ENCODE measurements at regions of chr22 and their contacts with region 1.

Region 1: DNA sequence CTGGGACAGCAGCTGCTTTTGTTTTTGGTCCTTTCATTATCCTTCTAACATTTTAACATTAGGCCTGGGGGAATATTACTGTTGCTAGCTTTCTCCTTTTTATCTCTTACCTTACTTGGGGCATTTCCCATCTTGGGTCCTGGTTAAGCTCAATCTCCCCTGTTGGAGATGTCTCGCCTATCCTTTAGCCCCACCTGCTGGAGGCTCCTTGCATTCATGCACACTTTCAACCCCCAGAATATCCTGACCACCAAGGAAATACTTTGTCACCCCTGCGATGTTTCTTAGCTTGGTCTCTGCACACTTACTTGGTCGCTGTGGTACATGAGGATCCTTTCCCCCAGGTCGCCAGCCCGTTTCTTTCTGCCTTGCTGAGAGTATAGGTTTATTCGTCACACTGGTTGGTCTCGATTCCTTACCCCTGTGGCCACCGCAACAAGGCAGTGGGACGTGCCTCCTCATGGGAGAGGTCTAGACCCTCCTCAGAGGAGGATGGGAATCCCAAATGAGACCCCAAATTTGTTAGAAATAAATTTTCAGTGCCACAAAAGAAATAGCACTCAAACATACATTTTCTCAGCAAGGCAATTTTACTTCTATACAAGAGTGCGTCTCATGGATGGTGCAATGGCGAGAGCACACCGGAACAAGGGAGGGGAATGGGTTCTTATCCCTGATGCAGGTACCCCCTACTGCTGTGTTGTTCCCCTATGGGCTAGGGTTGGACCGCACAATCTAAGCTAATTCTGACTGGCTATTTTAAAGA is 5.4 kb upstream of the TXN2 start:
- DNase-seq: peak; percentile 43
- H3K4me3 ChIP-seq: no peak overlapping the region
- H3K27ac ChIP-seq: no peak overlapping the region
- H3K4me1 ChIP-seq: no peaks in the 10 kb centered on the region
- H3K27me3 ChIP-seq: no peaks in the 10 kb centered on the region
- CTCF ChIP-seq: peak; percentile 51 to 70
- POLR2A ChIP-seq: no peak

Region 2: DNA sequence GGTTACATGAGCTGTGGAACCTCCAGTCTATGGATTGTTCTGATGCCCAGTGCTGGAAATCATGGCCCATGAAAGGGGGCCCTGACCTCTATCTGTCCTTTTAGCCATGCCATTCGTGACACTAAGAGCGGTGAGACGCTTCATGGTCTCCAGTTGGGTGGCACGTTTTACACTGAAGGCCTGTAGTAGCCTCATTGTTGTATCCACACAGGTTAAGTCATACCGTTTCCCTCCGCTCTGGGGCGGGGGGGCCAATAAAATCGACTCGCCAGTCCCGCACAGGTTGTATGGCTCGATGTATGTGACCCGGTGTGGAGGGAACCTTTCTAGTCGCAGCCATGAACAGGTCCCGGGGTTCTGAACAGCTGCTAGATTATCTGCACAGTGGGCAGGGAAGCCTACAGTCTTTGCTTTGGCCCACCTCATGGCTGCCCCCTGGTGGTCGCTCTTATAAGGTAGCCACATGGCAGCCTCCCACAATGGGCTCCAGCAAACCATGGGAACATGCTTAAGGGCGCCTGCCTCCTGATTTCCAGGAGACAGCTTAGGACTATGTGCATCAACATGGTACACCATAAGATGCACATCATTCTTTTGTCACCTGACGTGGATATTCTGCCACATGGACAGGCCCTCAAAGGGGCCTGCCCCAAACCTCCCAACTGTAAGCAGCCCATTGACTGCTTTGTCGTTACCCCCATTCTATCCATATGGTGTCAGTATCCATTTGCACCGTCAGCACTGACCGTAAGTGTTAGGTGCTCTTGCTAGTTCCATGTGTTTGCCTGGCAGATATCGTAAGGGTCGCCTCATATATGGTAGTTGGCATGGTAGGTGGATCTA is 306.5 kb before region 1 on chr22:
- CTCF ChIA-PET with region 1: interaction called, 17 read pairs
- POLR2A ChIA-PET with region 1: no interaction called
- dilution Hi-C with region 1: no loop called
- intact Hi-C with region 1: loop called (anchors 1 kb)
- DNase-seq: peak; percentile 71
- H3K4me3 ChIP-seq: no peak overlapping the region
- H3K27ac ChIP-seq: no peak overlapping the region
- H3K4me1 ChIP-seq: no peaks in the 10 kb centered on the region
- H3K27me3 ChIP-seq: no peaks in the 10 kb centered on the region
- CTCF ChIP-seq: peak; percentile 84 to 92
- POLR2A ChIP-seq: no peak

Region 3: DNA sequence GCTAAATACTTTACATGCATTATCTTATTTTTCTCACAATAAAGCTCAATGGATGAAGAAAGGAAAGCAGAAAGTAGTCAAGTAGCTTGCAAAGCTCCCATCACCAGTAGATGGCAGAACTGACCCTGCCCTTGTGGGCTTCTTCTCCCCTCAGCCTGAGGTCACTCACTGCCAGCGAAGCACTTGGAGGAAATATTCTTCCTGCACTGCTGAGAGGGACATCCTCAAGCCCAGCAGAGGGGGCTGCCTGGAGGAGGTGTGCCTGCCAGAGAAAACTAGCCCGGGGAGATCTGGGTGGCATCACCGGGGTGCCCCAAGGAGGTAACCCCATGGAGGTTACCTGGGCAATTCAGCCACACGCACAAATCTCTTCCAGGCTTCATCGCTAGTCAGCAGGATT is 291.8 kb before region 1 on chr22:
- CTCF ChIA-PET with region 1: interaction called, 48 read pairs
- POLR2A ChIA-PET with region 1: no interaction called
- dilution Hi-C with region 1: no loop called
- intact Hi-C with region 1: loop called (anchors 1 kb)
- DNase-seq: peak; percentile 74
- H3K4me3 ChIP-seq: no peak overlapping the region
- H3K27ac ChIP-seq: no peak overlapping the region
- H3K4me1 ChIP-seq: peaks cover 33% of the 10 kb centered on the region
- H3K27me3 ChIP-seq: peaks cover 0 to 6% of the 10 kb centered on the region in 2 experiments
- CTCF ChIP-seq: peak; percentile 68 to 76
- POLR2A ChIP-seq: no peak

Region 4: DNA sequence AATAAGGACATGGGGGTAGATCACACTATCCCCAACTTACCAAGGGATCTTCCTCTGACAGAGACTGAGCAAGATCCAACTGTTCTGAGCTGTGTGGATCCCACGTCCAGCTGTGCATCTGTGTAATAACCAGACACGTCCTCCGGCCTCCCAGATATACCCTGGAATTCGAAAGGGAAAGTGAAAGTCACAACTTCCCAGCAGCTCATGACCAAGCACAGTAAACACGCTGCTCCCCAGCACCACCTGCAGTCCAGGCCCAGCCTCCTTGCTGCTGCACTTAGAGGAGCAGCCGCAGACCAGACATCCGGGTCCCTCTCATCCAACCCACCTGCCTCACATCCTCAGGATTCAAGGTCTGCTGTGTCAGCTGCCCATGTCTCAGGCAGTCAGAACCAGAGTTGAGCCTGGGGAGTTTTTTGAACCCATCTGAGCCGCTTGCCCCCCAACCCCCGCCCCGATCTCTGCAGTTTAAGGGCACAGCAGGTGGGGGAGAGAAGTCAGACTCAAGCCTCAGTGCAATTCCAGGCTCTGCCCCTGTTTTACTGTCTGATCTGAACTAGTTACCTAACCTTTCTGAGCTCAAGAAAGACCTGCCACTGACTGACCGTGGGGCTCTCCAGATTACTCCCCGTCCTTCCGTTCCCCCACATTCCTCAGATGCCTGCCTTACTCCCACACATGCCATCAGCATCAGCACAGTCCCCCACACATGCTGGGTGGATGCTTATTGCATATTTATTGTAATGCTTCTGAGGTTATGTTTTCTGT is 247.2 kb before region 1 on chr22 and contains the start of gene APOL2:
- CTCF ChIA-PET with region 1: interaction called, 27 read pairs
- POLR2A ChIA-PET with region 1: no interaction called
- dilution Hi-C with region 1: no loop called
- intact Hi-C with region 1: loop called (anchors 2 kb)
- DNase-seq: peak; percentile 93
- H3K4me3 ChIP-seq: peak within 1 kb of the TSS; percentile 48 to 82 (median 67)
- H3K27ac ChIP-seq: peak within 1 kb of the TSS; percentile 31
- H3K4me1 ChIP-seq: peaks cover 16% of the 10 kb centered on the region
- H3K27me3 ChIP-seq: no peaks in the 10 kb centered on the region
- CTCF ChIP-seq: peak; percentile 54 to 80
- POLR2A ChIP-seq: peak; percentile 84
- total RNA-seq, gene APOL2: 37.6 and 41.9 TPM in 2 replicates

Region 5: GRCh38 chr22:36286471-36287224 is 200.2 kb before region 1 on chr22:
- CTCF ChIA-PET with region 1: interaction called, 13 read pairs
- POLR2A ChIA-PET with region 1: no interaction called
- dilution Hi-C with region 1: no loop called
- intact Hi-C with region 1: no loop called
- DNase-seq: peak; percentile 68
- H3K4me3 ChIP-seq: no peak overlapping the region
- H3K27ac ChIP-seq: no peak overlapping the region
- H3K4me1 ChIP-seq: no peaks in the 10 kb centered on the region
- H3K27me3 ChIP-seq: no peaks in the 10 kb centered on the region
- CTCF ChIP-seq: peak; percentile 95 to 96
- POLR2A ChIP-seq: peak; percentile 41

Region 6: GRCh38 chr22:36790648-36791047 is 303.8 kb after region 1 on chr22:
- CTCF ChIA-PET with region 1: no interaction called
- POLR2A ChIA-PET with region 1: no interaction called
- dilution Hi-C with region 1: no loop called
- intact Hi-C with region 1: no loop called
- DNase-seq: no peak
- H3K4me3 ChIP-seq: no peak overlapping the region
- H3K27ac ChIP-seq: no peak overlapping the region
- H3K4me1 ChIP-seq: no peaks in the 10 kb centered on the region
- H3K27me3 ChIP-seq: peaks cover 9 to 22% of the 10 kb centered on the region in 2 experiments
- CTCF ChIP-seq: no peak
- POLR2A ChIP-seq: no peak

Region 7: DNA sequence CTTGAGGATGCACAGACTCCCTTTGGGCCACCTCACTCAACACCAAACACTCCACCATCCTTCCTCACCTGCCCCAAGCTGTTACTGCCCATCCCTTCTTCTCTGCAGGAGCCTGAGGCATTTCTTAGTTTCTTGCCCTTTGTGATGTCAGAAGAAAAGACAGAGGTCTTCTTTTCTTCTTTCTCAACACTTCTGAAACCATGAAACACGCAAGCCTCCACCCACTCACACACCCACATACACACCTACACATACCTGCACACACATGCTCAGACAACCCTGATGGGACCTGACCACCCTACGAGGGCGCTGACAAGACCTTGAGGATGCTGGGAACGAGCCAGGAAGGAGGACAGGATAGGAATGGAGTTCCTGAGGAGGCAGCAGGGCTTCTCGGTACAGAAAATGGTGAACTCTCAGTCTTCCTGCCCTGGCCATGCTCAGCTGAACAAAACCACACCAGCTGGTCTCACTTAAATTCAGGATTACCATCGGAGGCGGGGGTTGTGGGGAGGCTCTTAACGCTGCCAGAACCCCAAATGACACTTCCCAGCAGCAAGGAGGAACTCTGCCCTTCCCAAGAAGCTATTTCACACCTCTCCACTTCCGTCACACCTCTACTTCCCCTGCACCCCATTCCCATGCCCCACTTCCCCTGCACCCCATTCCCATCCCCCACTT is 467.5 kb after region 1 on chr22:
- CTCF ChIA-PET with region 1: no interaction called
- POLR2A ChIA-PET with region 1: no interaction called
- dilution Hi-C with region 1: no loop called
- intact Hi-C with region 1: no loop called
- DNase-seq: no peak
- H3K4me3 ChIP-seq: no peak overlapping the region
- H3K27ac ChIP-seq: no peak overlapping the region
- H3K4me1 ChIP-seq: no peaks in the 10 kb centered on the region
- H3K27me3 ChIP-seq: no peaks in the 10 kb centered on the region
- CTCF ChIP-seq: no peak
- POLR2A ChIP-seq: no peak

Measured in endothelial cell of umbilical vein (primary cell).